GM23248 (cell line): ENCODE measurements at regions of chr6 and their contacts with region 1.

Region 1: DNA sequence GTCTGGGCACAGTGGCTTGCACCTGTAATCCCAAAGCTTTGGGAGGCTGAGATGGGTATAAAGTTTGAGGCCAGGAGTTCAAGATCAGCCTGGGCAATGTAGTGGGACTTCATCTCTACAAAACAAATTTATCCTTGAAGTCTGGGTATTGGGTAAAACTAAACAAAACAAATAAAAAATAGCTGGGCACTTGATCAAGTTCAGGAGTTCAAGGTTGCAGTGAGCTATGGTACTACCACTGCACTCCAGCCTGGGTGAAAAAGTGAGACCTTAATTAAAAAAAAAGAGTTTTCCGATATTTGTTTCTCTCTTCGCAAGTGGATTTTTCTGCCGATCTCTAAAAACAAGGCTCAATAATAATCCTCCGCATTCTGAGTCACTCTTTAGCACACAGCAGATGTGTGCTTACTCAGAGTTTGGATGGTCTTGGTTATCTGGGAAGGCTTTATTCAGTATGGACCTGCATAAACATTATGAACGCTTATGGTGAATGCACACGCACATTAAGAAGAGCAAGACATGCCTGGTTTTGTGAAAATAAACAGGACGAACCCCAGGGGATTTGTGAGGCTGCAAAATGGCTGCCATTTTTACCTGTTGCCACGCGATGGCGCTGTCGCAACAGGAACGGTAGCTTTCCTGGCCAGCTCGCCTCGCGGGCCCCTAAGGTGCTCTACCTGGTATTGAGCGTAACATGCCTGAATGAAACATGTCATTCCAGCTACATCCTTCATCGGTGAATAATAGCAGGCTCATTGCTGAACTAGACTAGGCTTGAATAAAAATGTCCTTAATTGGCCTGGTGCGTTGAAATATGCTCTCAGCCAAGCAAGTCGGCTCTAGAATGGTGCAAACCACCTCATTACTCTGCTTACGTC is 6.0 kb downstream of the OPN5 start:
- DNase-seq: peak; percentile 73
- H3K4me3 ChIP-seq: peak overlapping the region; percentile 33; the same call in 1 of the 2 replicates
- H3K27ac ChIP-seq: no peak overlapping the region
- H3K4me1 ChIP-seq: no peaks in the 10 kb centered on the region
- H3K27me3 ChIP-seq: peaks cover 47% of the 10 kb centered on the region

Region 2: DNA sequence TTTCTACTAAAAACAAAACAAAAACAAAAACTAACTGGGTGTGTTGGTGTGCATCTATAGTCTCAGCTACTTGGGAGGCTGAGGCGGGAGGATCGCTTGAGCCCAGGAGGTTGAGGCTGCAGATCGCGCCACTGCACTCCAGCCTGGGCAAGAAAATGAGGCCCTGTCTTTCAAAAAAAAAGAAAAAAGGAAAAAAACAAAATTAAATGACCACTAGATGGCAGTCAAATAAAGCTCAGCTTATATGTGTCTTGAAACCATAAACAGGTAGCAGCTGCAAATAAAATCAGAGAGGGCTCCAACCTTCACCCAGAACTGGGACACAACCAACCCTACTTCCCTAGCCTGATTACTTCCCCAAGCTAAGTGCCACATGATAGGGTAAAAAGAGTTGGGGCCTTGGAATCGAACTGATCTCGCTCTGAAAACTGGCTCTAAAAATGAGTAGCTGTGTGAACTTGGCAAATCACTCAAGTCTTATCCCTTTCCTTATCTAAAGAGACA is 156.5 kb before region 1 on chr6:
- in situ Hi-C with region 1: loop called (anchors 10 kb)
- DNase-seq: peak; percentile 54
- H3K4me3 ChIP-seq: no peak overlapping the region
- H3K27ac ChIP-seq: no peak overlapping the region
- H3K4me1 ChIP-seq: no peaks in the 10 kb centered on the region
- H3K27me3 ChIP-seq: no peaks in the 10 kb centered on the region

Region 3: DNA sequence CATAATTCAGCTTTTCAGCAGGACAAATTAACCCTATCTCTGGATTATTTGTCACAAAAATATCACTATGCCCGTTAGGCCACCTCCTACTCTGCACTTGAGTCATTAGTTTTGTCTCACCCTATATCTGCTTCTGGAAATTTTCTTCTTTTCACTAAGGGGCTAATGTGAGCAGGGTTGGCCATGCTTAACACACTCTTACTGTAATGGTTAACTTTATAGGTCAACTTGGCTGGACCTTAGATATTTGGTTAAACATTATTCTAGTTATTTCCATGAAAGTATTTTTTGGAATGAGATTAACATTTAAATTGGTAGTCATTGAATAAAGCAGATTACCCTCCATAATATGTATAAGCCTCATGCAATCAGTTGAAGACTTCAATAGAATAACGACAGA is 717.8 kb after region 1 on chr6:
- in situ Hi-C with region 1: no loop called
- DNase-seq: no peak
- H3K4me3 ChIP-seq: no peak overlapping the region
- H3K27ac ChIP-seq: no peak overlapping the region
- H3K4me1 ChIP-seq: no peaks in the 10 kb centered on the region
- H3K27me3 ChIP-seq: no peaks in the 10 kb centered on the region

Region 4: DNA sequence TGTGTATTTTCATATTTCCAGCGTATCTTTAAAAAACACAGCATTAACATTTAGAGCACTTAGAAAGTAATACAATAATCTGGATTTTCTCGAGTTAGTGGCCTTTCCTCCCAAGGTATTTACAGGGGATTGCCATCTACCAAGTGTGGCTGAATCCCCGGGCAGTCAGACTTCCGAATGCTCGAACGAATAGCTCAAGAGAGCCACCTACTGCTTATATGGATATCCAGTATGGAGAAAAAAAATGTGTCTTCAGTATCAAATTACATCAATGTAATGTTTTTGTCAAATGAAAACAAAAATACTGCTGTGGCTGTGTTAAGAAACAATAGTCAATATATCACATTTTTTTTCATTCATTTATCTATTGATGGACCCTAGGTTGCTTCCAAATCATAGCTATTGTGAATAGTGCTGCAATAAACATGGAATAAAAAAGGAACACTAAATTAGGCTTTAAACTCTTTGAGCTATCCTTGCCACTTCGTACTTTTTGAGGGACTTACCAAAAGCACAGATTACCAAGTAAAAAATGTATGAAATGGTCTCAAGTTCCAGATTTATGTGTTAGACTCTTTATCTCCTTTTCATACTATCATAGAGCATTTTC is 977.6 kb after region 1 on chr6:
- in situ Hi-C with region 1: loop called (anchors 25 kb)
- DNase-seq: peak; percentile 81
- H3K4me3 ChIP-seq: no peak overlapping the region
- H3K27ac ChIP-seq: no peak overlapping the region
- H3K4me1 ChIP-seq: peaks cover 23% of the 10 kb centered on the region
- H3K27me3 ChIP-seq: no peaks in the 10 kb centered on the region

Region 5: GRCh38 chr6:49409951-49410542 is 1622.2 kb after region 1 on chr6:
- in situ Hi-C with region 1: loop called (anchors 25 kb)
- DNase-seq: peak; percentile 71
- H3K4me3 ChIP-seq: no peak overlapping the region; the same call in 1 of the 2 replicates
- H3K27ac ChIP-seq: no peak overlapping the region
- H3K4me1 ChIP-seq: no peaks in the 10 kb centered on the region
- H3K27me3 ChIP-seq: no peaks in the 10 kb centered on the region